ENCODE measurements at regions of chr11 and their contacts with region 1.

Region 1: DNA sequence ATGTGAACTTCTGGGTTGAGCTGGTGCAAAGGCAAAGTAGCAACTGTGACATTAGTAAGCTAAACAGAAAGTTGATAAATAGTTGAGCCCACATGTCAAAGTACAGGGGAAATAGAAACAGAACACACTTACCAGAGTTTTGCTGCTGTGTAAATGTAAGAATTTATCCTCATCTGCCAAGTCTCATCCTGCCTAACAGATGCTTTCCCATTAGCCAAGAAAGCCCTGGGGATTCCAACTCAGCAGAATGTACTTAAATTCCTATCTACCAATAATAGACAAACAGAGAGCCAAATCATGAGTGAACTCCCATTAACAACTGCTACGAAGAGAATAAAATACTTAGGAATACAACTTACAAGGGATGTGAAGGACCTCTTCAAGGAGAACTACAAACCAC is 7.3 kb upstream of the OR51A2 start:
- DNase-seq: no peak
- H3K4me3 ChIP-seq: no peak overlapping the region
- H3K4me3 Mint-ChIP-seq: no peak overlapping the region
- H3K27ac Mint-ChIP-seq: no peak overlapping the region
- H3K4me1 ChIP-seq: no peaks in the 10 kb centered on the region
- H3K4me1 Mint-ChIP-seq: no peaks in the 10 kb centered on the region
- H3K27me3 ChIP-seq: no peaks in the 10 kb centered on the region
- H3K27me3 Mint-ChIP-seq: peaks cover 9% of the 10 kb centered on the region
- CTCF ChIP-seq: no peak

Region 2: DNA sequence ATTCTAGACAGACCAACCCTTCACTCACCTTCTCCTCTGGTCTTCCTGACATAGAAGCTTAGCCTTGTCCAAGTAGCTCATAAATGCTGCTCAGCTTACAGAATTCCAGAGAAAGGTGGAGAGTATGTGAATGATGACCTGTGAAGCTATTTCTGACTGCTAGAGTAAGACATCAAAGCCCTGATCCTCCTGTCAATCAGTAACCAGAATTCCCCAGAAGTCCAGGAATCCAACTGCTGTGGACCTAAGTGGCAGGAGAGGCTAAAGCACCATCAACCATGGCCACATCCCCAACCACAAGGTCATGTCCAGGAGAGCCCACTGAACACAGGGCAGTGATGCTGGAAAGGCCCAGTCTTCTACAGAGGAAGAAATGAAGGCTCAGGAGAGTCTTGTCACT is 46.2 kb before region 1 on chr11:
- CTCF ChIA-PET with region 1: no interaction called
- POLR2A ChIA-PET with region 1: no interaction called
- intact Hi-C with region 1: no loop called
- DNase-seq: peak; percentile 33 to 52
- H3K4me3 ChIP-seq: no peak overlapping the region
- H3K4me3 Mint-ChIP-seq: peak overlapping the region; percentile 1
- H3K27ac Mint-ChIP-seq: peak overlapping the region; percentile 43
- H3K4me1 ChIP-seq: no peaks in the 10 kb centered on the region; the same call in 1 of the 2 replicates
- H3K4me1 Mint-ChIP-seq: peaks cover 11% of the 10 kb centered on the region
- H3K27me3 ChIP-seq: no peaks in the 10 kb centered on the region
- H3K27me3 Mint-ChIP-seq: no peaks in the 10 kb centered on the region
- CTCF ChIP-seq: no peak

Region 3: DNA sequence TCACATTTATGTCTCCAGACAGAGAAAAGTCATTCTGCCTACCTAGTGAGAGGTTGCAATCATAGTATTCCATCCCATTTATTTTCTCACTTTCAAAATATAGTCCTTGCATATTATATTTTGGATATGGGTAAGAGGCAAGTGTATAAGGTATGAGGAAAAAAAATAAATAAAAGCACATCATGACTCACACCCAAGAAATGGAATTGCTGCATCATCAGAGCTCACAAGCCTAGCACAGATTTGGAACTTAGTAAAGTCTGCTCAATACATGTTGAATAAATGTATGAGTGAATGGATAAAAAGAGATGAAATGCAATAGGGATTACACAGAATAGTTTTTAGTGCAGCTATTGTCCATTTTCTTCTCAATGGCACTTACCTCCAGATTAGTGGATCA is 36.2 kb before region 1 on chr11:
- CTCF ChIA-PET with region 1: no interaction called
- POLR2A ChIA-PET with region 1: no interaction called
- intact Hi-C with region 1: loop called (anchors 5 kb)
- DNase-seq: no peak
- H3K4me3 ChIP-seq: no peak overlapping the region
- H3K4me3 Mint-ChIP-seq: no peak overlapping the region
- H3K27ac Mint-ChIP-seq: no peak overlapping the region
- H3K4me1 ChIP-seq: no peaks in the 10 kb centered on the region
- H3K4me1 Mint-ChIP-seq: no peaks in the 10 kb centered on the region
- H3K27me3 ChIP-seq: no peaks in the 10 kb centered on the region
- H3K27me3 Mint-ChIP-seq: peaks cover 23% of the 10 kb centered on the region
- CTCF ChIP-seq: no peak

Region 4: GRCh38 chr11:5011254-5011653 is 48.4 kb after region 1 on chr11:
- CTCF ChIA-PET with region 1: no interaction called
- POLR2A ChIA-PET with region 1: no interaction called
- intact Hi-C with region 1: no loop called
- DNase-seq: no peak
- H3K4me3 ChIP-seq: no peak overlapping the region
- H3K4me3 Mint-ChIP-seq: no peak overlapping the region
- H3K27ac Mint-ChIP-seq: no peak overlapping the region
- H3K4me1 ChIP-seq: no peaks in the 10 kb centered on the region
- H3K4me1 Mint-ChIP-seq: no peaks in the 10 kb centered on the region
- H3K27me3 ChIP-seq: no peaks in the 10 kb centered on the region; the same call in 1 of the 2 replicates
- H3K27me3 Mint-ChIP-seq: peaks cover 9% of the 10 kb centered on the region
- CTCF ChIP-seq: no peak

Region 5: GRCh38 chr11:5065027-5065426 is 102.2 kb after region 1 on chr11:
- CTCF ChIA-PET with region 1: no interaction called
- POLR2A ChIA-PET with region 1: no interaction called
- intact Hi-C with region 1: no loop called
- DNase-seq: no peak
- H3K4me3 ChIP-seq: no peak overlapping the region
- H3K4me3 Mint-ChIP-seq: no peak overlapping the region
- H3K27ac Mint-ChIP-seq: no peak overlapping the region
- H3K4me1 ChIP-seq: no peaks in the 10 kb centered on the region
- H3K4me1 Mint-ChIP-seq: no peaks in the 10 kb centered on the region
- H3K27me3 ChIP-seq: no peaks in the 10 kb centered on the region
- H3K27me3 Mint-ChIP-seq: peaks cover 11% of the 10 kb centered on the region
- CTCF ChIP-seq: no peak

Measured in Caco-2 (cell line).